ENCODE measurements at regions of chr13 and their contacts with region 1.

Region 1: DNA sequence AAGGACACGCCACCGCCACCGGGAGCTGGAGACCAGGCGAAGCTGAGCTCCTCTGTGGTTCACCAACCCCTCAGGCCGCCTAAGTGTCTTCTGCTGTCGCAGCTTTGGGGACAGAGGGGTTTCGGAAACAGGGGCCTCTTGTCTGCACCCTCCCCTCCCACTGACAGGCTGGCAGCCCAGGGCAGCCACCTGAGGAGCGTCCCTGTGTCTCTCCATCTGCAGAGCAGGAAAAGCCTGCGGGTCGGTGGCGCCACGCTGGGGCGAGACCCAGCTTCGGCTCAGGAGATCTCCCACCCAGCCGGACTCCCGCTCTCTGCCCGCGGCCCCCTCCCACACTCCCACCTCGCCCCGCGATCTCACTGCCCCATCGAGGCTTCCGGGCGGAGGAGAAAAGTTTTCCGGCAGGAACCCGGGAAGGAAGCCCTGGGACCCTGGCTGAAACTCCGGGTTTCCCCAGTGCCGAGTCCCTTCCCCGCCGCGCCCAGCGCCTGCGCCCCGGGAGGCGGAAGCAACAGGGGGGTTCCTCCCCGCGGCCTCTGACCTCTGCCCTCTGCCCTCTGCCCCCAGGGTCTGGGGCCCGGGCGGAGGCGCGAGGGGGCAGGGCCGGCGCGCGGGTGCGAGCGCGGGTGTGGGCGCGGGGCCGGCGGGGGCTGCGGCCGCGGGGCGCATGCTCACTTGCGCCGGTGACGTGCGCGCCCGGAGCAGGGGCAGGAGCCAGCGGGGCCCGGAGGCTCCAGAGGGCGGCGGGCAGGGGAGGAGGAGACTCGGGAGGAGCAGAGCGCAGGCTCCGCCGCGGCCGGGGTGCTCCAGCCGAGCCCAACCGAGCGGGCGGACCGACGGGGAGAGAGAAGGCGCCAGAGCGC is at the start of gene ATP11A:
- DNase-seq: peak; percentile 86
- H3K4me3 ChIP-seq: peak within 1 kb of the TSS; percentile 73 to 92 (median 75)
- H3K27ac ChIP-seq: peak within 1 kb of the TSS; percentile 51
- H3K4me1 ChIP-seq: peaks cover 9% of the 10 kb centered on the region
- H3K27me3 ChIP-seq: no peaks in the 10 kb centered on the region
- CTCF ChIP-seq: no peak
- total RNA-seq, gene ATP11A: 13.2 to 36.9 TPM

Region 2: DNA sequence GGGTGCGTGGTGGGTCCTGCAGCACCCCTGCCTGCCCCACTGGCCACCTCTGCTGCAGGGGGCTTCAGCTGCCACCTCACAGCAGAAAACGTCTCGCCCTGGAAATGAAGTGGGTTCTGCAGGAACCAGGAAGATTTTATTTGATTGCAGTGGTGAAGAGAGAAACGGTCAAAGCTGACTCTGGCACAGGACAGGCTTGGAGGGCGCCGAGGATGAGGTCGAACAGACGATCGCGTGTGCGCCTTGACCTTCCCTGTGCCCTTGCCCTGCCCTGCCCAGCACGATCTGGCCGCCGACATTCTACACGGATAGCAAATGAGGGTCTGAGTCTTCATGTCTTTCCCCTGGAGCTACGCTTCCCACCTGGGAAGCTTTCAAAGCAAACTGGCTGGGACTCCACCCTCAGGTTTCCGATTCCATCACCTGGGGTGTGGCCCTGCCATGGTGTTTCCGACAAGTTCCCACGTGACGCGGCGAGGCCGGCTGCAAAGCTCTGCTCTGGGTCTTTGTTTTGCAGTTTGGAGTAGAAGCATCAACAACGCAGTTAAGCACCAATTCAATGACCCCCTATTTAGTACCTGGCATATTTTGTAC is 51.3 kb before region 1 on chr13:
- CTCF ChIA-PET with region 1: no interaction called
- dilution Hi-C with region 1: loop called (anchors 5 kb)
- in situ Hi-C with region 1: no loop called
- intact Hi-C with region 1: no loop called
- DNase-seq: no peak
- H3K4me3 ChIP-seq: no peak overlapping the region
- H3K27ac ChIP-seq: no peak overlapping the region
- H3K4me1 ChIP-seq: peaks cover 8% of the 10 kb centered on the region
- H3K27me3 ChIP-seq: peaks cover 21% of the 10 kb centered on the region
- CTCF ChIP-seq: no peak

Region 3: DNA sequence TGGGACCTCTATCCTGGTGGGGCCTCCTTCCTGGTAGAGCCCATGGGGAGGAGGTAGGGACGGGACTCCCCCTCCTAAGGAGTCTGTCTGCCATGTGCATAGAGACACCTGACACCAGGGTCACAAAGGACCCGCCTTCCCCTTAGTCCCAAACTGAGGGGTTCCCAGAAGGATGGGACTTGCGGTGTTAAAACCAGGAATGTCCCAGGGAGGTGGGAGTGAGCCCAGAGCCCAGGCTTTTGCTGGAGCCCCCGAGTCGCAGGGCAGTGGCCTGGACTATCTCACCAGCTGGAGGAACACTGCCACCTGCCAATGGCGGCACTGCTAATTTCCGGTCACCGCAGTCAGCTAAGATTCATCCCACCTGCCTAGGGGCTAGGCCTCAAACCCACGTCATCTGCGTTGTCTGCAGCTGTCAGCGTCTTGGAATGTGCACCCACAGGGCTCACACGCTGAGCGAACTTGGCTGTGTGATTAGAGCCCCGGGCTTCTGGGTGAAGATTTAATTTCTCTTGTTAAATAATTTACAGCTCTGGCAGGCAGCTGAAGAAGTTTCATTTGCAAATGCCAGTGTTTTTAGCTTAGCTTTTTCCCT is 31.6 kb before region 1 on chr13:
- CTCF ChIA-PET with region 1: no interaction called
- dilution Hi-C with region 1: no loop called
- in situ Hi-C with region 1: no loop called
- intact Hi-C with region 1: loop called (anchors 2 kb)
- DNase-seq: peak; percentile 81
- H3K4me3 ChIP-seq: no peak overlapping the region
- H3K27ac ChIP-seq: peak overlapping the region; percentile 56
- H3K4me1 ChIP-seq: peaks cover 14% of the 10 kb centered on the region
- H3K27me3 ChIP-seq: no peaks in the 10 kb centered on the region
- CTCF ChIP-seq: no peak

Region 4: DNA sequence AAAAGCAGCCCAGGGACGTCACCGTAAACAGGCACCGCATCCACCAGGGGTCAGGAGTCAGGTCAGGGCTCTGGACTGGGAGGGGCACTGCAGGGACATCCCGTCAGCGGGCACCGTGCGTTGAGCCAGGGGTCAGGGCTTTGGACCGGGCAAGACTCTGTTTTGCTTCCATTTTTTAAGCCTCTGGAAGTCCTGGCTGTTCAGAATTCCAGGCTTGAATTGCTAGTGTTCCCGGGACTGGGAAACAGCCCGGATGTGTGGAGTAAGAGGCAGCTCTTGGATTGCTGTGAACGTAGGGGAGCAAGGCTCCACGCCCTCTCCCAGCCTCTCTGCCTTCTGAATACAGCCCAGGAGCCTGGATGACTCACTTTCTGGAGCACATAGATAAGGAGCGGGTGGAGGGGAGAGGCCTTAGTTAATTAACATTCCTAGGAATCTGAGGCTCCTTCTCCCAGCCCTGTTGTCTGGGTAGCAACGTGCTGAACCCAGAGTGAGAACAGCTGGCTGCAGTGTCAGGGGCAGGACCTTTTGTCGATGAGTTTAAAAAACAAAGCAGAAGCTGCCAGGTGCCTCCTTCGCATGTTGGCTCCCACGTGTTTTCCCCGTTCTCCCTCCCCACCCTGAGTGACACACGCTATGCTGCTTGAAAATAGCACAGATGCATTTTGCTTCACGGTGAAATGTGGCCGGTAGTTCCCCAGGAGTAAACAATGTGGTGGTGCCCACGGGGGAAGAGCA is 22.2 kb after region 1 on chr13:
- CTCF ChIA-PET with region 1: no interaction called
- dilution Hi-C with region 1: no loop called
- in situ Hi-C with region 1: no loop called
- intact Hi-C with region 1: loop called (anchors 1 kb)
- DNase-seq: peak; percentile 89
- H3K4me3 ChIP-seq: peak overlapping the region; percentile 38 to 51 (median 42)
- H3K27ac ChIP-seq: peak overlapping the region; percentile 67
- H3K4me1 ChIP-seq: peaks cover 18% of the 10 kb centered on the region
- H3K27me3 ChIP-seq: no peaks in the 10 kb centered on the region
- CTCF ChIP-seq: peak in 1 of 2 donors; percentile 13

Region 5: DNA sequence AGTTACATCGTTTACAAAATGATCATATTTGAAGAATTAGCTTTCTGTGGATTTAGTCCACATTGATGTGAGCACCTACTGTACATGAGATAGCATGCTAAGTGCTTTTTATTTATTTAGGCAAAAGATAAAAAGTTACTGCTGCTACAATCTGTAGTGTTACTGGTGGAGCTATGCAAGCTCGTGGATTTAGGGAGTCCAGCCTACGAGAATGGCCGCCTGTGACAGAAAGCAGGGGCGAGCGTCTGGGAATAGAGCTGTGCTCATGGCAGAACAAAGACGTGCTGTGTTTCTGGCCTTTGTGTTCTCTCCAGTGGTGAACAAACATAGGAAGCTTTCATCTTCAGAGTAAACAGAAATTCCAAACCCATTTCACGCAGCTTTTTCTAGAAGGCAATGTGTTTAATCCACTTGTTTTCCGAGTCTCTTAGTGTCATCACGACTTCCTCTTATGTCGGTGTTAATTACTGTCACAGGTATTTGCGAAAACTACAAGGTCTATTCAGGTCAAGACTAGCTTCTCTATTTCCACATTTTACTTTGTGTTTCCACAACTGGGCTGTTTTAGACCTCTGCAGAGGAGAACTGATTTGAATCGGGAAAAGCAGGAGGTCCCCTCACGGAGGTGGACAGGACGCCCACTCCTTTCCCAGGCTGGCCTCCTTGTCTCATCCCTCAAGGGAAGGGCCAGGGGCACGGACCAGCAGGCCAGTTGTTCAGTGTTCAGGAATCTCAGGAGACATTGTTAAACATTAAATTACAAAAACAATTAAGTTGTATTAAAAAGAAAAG is 67.6 kb after region 1 on chr13:
- CTCF ChIA-PET with region 1: no interaction called
- dilution Hi-C with region 1: loop called (anchors 5 kb)
- in situ Hi-C with region 1: no loop called
- intact Hi-C with region 1: no loop called
- DNase-seq: no peak
- H3K4me3 ChIP-seq: no peak overlapping the region
- H3K27ac ChIP-seq: no peak overlapping the region
- H3K4me1 ChIP-seq: peaks cover 12% of the 10 kb centered on the region
- H3K27me3 ChIP-seq: no peaks in the 10 kb centered on the region
- CTCF ChIP-seq: no peak

Region 6: GRCh38 chr13:113064534-113065405 is 375.2 kb after region 1 on chr13:
- CTCF ChIA-PET with region 1: no interaction called
- dilution Hi-C with region 1: no loop called
- in situ Hi-C with region 1: no loop called
- intact Hi-C with region 1: no loop called
- DNase-seq: peak; percentile 8
- H3K4me3 ChIP-seq: no peak overlapping the region
- H3K27ac ChIP-seq: no peak overlapping the region
- H3K4me1 ChIP-seq: no peaks in the 10 kb centered on the region
- H3K27me3 ChIP-seq: no peaks in the 10 kb centered on the region
- CTCF ChIP-seq: no peak